ENCODE measurements at regions of chr7 and their contacts with region 1.

Region 1: DNA sequence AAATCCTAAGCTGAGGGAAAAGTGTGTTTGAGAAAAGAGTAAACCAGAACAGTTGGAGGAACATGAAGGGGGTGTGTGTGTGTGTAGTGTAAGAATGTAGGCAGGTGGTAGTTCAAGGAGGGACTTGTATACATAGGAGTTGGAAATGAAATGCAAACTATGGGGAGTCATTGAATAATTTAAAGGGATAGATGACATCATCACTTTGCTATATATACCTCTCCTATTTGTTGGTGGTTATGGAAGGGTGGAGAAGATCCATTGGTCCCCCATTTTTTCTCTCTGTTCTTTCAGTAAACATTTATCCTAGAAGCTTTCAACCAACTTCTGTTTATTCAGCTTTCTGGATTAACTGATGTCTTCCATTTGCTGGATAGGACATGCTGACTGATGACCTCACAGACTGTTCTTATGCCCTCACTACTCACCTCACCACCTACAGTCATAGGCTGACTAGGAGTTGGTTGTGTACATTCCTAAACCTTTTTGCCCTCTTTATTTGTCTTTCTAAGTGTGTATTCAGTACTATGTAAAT is 20.8 kb downstream of the PPP1R9A start:
- DNase-seq: no peak
- H3K4me3 ChIP-seq: no peak overlapping the region
- CTCF ChIP-seq: no peak

Region 2: GRCh38 chr7:94829987-94830386 is 98.3 kb before region 1 on chr7:
- in situ Hi-C with region 1: loop called (anchors 5 kb)
- DNase-seq: no peak
- H3K4me3 ChIP-seq: no peak overlapping the region
- CTCF ChIP-seq: no peak

Region 3: GRCh38 chr7:94877731-94878670 is 50.2 kb before region 1 on chr7:
- in situ Hi-C with region 1: no loop called
- DNase-seq: no peak
- H3K4me3 ChIP-seq: no peak overlapping the region
- CTCF ChIP-seq: no peak

Region 4: GRCh38 chr7:95011146-95011928 is 83.1 kb after region 1 on chr7:
- in situ Hi-C with region 1: no loop called
- DNase-seq: peak; percentile 77
- H3K4me3 ChIP-seq: no peak overlapping the region
- CTCF ChIP-seq: no peak

Measured in astrocyte of the cerebellum (primary cell).